HCT116 (cell line): ENCODE measurements at regions of chr12 and their contacts with region 1.

Region 1: GRCh38 chr12:52390739-52391617 is 5.5 kb upstream of the KRT84 start:
- DNase-seq: peak; percentile 24
- ATAC-seq: peak; percentile 79
- H3K4me3 ChIP-seq: no peak overlapping the region
- H3K27ac ChIP-seq: no peak overlapping the region
- H3K4me1 ChIP-seq: peaks cover 0 to 23% of the 10 kb centered on the region in 2 experiments; a peak in 1 of 4 replicates
- H3K27me3 ChIP-seq: no peaks in the 10 kb centered on the region
- CTCF ChIP-seq: peak; percentile 84 to 93 (median 85)
- POLR2A ChIP-seq: no peak
- RAD21 ChIP-seq: peak; percentile 91

Region 2: DNA sequence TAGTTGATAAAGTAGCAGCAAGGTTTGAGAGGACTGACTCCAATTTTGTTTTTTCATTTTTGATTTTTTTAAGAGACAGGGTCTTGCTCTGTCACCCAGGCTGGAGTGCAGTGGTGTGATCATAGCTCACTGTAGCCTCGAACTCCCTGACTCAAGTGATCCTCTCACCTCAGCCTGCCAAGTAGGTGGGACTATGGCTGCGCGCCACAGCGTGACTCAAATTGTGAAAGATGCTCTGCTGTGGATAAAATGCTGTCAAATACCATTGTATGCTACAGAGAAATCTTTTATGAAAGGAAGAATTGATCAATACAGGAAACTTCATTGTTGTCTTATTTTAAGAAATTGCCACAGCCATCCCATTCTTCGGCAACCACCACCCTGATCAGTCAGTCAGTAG is 751.6 kb before region 1 on chr12:
- CTCF ChIA-PET with region 1: no interaction called
- POLR2A ChIA-PET with region 1: no interaction called
- RAD21 ChIA-PET with region 1: no interaction called
- intact Hi-C with region 1: no loop called
- DNase-seq: no peak
- ATAC-seq: no peak
- H3K4me3 ChIP-seq: no peak overlapping the region
- H3K27ac ChIP-seq: no peak overlapping the region
- H3K4me1 ChIP-seq: no peaks in the 10 kb centered on the region
- H3K27me3 ChIP-seq: no peaks in the 10 kb centered on the region
- CTCF ChIP-seq: no peak
- POLR2A ChIP-seq: no peak
- RAD21 ChIP-seq: no peak

Region 3: DNA sequence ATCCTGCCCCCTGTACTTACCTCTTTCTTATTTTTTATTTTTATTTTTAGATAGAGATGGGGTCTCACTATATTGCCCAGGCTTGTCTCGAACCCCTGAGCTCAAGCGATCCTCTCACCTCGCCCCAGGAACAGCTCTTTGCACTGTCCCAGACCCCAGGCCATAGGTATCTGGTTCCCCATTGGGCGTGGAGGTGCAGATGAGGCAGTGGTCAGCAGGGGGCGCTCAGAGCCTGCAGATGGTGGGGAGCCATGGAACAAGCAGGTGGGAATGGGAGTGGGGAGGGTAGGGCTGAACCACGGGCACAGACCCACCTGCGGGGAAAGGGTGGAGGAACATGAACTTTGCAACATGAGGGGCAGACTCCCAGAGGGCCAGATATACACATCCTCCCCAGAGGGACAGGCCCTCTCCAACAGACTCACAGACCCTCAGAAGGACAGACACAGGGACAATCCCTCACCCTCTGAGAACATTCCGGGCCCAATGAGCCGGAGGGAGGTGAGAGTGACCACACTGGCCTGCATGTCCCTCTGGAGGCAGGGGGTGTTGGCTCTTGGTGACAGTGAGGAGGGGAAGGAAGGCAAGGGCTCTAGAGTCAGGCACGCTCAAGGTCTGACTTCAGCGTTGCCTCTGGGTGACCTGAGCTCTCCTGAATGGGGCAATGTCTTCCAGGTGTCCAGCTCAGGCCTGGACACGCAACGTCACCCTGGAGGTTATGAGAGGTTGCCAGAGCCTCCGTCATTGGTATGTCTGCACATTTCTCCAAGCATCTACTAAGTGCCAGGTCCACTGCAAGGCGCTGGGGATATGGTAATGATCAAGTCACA is 234.0 kb before region 1 on chr12:
- CTCF ChIA-PET with region 1: interaction called, 11 read pairs
- POLR2A ChIA-PET with region 1: no interaction called
- RAD21 ChIA-PET with region 1: interaction called in 1 of 2 experiments, 3 read pairs
- intact Hi-C with region 1: loop called (anchors 5 kb)
- DNase-seq: no peak
- ATAC-seq: peak; percentile 67
- H3K4me3 ChIP-seq: no peak overlapping the region
- H3K27ac ChIP-seq: no peak overlapping the region
- H3K4me1 ChIP-seq: peaks cover 27 to 64% of the 10 kb centered on the region in 2 experiments
- H3K27me3 ChIP-seq: no peaks in the 10 kb centered on the region
- CTCF ChIP-seq: peak in 2 of 3 experiments; percentile 95 to 98; a peak in 4 of 6 replicates
- POLR2A ChIP-seq: no peak
- RAD21 ChIP-seq: no peak

Region 4: GRCh38 chr12:52413788-52414345 is 22.9 kb after region 1 on chr12:
- CTCF ChIA-PET with region 1: interaction called, 12 read pairs
- POLR2A ChIA-PET with region 1: no interaction called
- RAD21 ChIA-PET with region 1: no interaction called
- intact Hi-C with region 1: no loop called
- DNase-seq: no peak
- ATAC-seq: peak; percentile 54
- H3K4me3 ChIP-seq: no peak overlapping the region
- H3K27ac ChIP-seq: no peak overlapping the region
- H3K4me1 ChIP-seq: peaks cover 0 to 18% of the 10 kb centered on the region in 2 experiments; a peak in 1 of 4 replicates
- H3K27me3 ChIP-seq: no peaks in the 10 kb centered on the region
- CTCF ChIP-seq: peak in 2 of 3 experiments; percentile 35 to 40; a peak in 3 of 6 replicates
- POLR2A ChIP-seq: no peak
- RAD21 ChIP-seq: no peak

Region 5: GRCh38 chr12:52543985-52544883 is 153.3 kb after region 1 on chr12:
- CTCF ChIA-PET with region 1: interaction called, 10 read pairs
- POLR2A ChIA-PET with region 1: no interaction called
- RAD21 ChIA-PET with region 1: no interaction called
- intact Hi-C with region 1: no loop called
- DNase-seq: no peak
- ATAC-seq: peak; percentile 70
- H3K4me3 ChIP-seq: no peak overlapping the region
- H3K27ac ChIP-seq: no peak overlapping the region
- H3K4me1 ChIP-seq: peaks cover 3 to 13% of the 10 kb centered on the region in 2 experiments; a peak in 3 of 4 replicates
- H3K27me3 ChIP-seq: no peaks in the 10 kb centered on the region
- CTCF ChIP-seq: peak in 1 of 3 experiments; percentile 10; a peak in 1 of 6 replicates
- POLR2A ChIP-seq: no peak
- RAD21 ChIP-seq: no peak

Region 6: GRCh38 chr12:52582971-52583456 is 192.0 kb after region 1 on chr12:
- CTCF ChIA-PET with region 1: interaction called, 22 read pairs
- POLR2A ChIA-PET with region 1: no interaction called
- RAD21 ChIA-PET with region 1: interaction called in 1 of 2 experiments, 3 read pairs
- intact Hi-C with region 1: loop called (anchors 5 kb)
- DNase-seq: peak; percentile 36
- ATAC-seq: peak; percentile 96
- H3K4me3 ChIP-seq: no peak overlapping the region
- H3K27ac ChIP-seq: no peak overlapping the region
- H3K4me1 ChIP-seq: peaks cover 0 to 40% of the 10 kb centered on the region in 2 experiments; a peak in 3 of 4 replicates
- H3K27me3 ChIP-seq: no peaks in the 10 kb centered on the region
- CTCF ChIP-seq: peak; percentile 73 to 95 (median 79)
- POLR2A ChIP-seq: no peak
- RAD21 ChIP-seq: peak; percentile 93

Region 7: GRCh38 chr12:52870351-52871290 is 479.6 kb after region 1 on chr12:
- CTCF ChIA-PET with region 1: interaction called, 29 read pairs
- POLR2A ChIA-PET with region 1: interaction called, 6 read pairs
- RAD21 ChIA-PET with region 1: interaction called, 6 to 7 read pairs
- intact Hi-C with region 1: loop called (anchors 1 kb)
- DNase-seq: no peak
- ATAC-seq: peak; percentile 71
- H3K4me3 ChIP-seq: 0 out of 4 replicates have a peak overlapping the region, but pooled peaks of 1 of the 2 experiments have one; percentile 16
- H3K27ac ChIP-seq: peak overlapping the region; percentile 81
- H3K4me1 ChIP-seq: peaks cover 48 to 64% of the 10 kb centered on the region in 2 experiments
- H3K27me3 ChIP-seq: no peaks in the 10 kb centered on the region
- CTCF ChIP-seq: peak in 2 of 3 experiments; percentile 89 to 96; a peak in 4 of 6 replicates
- POLR2A ChIP-seq: no peak
- RAD21 ChIP-seq: no peak